ENCODE measurements at regions of chr16 and their contacts with region 1.

Region 1: DNA sequence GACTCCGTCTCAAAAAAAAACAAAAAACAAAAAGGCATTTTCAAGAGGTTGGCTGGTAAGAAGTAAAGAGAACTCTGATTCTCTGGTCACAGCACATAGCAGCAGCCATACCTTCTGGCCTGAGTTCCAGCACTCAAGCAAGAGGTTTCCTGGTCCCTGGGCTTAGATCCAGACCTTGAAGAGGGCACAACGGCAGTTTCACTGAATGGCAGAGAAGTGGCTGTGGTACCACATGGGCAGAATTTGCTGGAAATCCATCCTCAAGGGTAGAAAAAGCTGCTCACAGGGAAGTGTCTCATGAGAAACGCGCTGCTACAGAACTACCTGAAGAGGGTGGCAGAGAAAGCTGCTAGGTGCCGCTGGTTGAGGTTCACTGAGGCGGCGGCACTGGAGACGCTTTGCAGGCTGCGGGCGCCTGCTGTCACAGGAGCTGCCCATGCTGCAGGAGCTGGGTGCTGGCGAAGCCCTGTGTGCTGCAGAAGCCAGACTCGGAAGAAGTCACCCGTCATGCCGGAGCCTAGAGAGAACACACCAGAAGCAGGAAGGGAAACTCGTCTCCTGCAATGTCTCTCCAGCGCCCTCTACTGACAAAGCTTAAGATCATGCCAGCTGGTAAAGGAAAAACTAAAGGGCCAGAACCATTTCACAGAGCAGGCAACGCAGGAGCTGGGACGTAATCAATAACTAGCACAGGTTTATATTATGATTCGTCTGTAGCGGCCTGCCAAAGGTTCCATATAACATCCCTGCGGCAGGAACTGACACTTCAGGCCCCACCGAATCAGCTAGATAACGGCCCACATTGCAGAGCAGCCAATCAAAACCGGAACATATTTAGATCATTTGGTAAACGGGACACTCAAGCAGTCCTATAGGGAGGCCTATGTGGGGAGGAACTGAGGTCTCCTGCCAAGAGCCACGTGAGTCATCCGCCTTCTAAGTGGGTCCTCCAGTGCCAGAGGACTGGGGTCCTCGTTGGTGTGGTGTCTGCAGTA is 5.4 kb upstream of the ZNF213 start:
- DNase-seq: peak; percentile 56 to 94 (median 82)
- ATAC-seq: peak; percentile 73
- H3K4me3 ChIP-seq: peak overlapping the region; percentile 71 to 75
- H3K4me3 Mint-ChIP-seq: peak overlapping the region; percentile 93
- H3K27ac ChIP-seq: peak overlapping the region; percentile 41 to 65
- H3K27ac Mint-ChIP-seq: peak overlapping the region; percentile 92
- H3K4me1 ChIP-seq: peaks cover 36% of the 10 kb centered on the region
- H3K4me1 Mint-ChIP-seq: peaks cover 62% of the 10 kb centered on the region
- H3K27me3 ChIP-seq: no peaks in the 10 kb centered on the region
- H3K27me3 Mint-ChIP-seq: no peaks in the 10 kb centered on the region
- CTCF ChIP-seq: peak; percentile 86

Region 2: DNA sequence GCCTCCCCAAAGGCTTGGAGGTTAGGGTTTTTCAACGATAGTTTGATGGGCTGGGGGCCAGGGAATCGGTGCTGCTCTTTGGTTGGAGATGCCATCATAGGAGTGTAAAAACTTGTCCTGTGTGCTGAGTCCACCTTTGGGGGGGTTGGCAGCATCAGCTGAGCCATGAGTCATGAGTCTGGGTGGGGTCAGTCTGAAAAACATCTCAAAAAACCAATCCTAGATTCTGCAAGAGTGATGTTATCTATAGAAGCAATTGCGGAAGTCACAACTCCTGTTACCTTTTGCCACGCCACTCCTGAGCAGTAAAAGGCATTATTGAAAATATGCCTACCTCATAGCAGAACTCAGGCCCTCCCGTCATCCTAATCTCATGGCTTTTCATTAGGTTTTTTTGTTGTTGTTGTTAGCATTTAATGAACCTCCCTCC is 333.7 kb before region 1 on chr16:
- CTCF ChIA-PET with region 1: no interaction called
- POLR2A ChIA-PET with region 1: no interaction called
- intact Hi-C with region 1: no loop called
- DNase-seq: no peak
- ATAC-seq: no peak
- H3K4me3 ChIP-seq: no peak overlapping the region
- H3K4me3 Mint-ChIP-seq: no peak overlapping the region
- H3K27ac ChIP-seq: no peak overlapping the region
- H3K27ac Mint-ChIP-seq: no peak overlapping the region
- H3K4me1 ChIP-seq: no peaks in the 10 kb centered on the region
- H3K4me1 Mint-ChIP-seq: no peaks in the 10 kb centered on the region
- H3K27me3 ChIP-seq: peaks cover 2 to 5% of the 10 kb centered on the region in 2 experiments
- H3K27me3 Mint-ChIP-seq: peaks cover 19% of the 10 kb centered on the region
- CTCF ChIP-seq: no peak

Region 3: GRCh38 chr16:3029537-3030402 is 99.7 kb before region 1 on chr16:
- CTCF ChIA-PET with region 1: interaction called, 184 read pairs
- POLR2A ChIA-PET with region 1: interaction called, 6 read pairs
- intact Hi-C with region 1: loop called (anchors 1 kb)
- DNase-seq: peak in 4 of 9 experiments; percentile 26 to 64 (median 42)
- ATAC-seq: peak; percentile 15
- H3K4me3 ChIP-seq: peak overlapping the region in 1 of 2 experiments; percentile 28
- H3K4me3 Mint-ChIP-seq: peak overlapping the region; percentile 66
- H3K27ac ChIP-seq: no peak overlapping the region
- H3K27ac Mint-ChIP-seq: no peak overlapping the region
- H3K4me1 ChIP-seq: peaks cover 33% of the 10 kb centered on the region
- H3K4me1 Mint-ChIP-seq: peaks cover 18% of the 10 kb centered on the region
- H3K27me3 ChIP-seq: peaks cover 20 to 30% of the 10 kb centered on the region in 2 experiments
- H3K27me3 Mint-ChIP-seq: peaks cover 38% of the 10 kb centered on the region
- CTCF ChIP-seq: no peak

Region 4: DNA sequence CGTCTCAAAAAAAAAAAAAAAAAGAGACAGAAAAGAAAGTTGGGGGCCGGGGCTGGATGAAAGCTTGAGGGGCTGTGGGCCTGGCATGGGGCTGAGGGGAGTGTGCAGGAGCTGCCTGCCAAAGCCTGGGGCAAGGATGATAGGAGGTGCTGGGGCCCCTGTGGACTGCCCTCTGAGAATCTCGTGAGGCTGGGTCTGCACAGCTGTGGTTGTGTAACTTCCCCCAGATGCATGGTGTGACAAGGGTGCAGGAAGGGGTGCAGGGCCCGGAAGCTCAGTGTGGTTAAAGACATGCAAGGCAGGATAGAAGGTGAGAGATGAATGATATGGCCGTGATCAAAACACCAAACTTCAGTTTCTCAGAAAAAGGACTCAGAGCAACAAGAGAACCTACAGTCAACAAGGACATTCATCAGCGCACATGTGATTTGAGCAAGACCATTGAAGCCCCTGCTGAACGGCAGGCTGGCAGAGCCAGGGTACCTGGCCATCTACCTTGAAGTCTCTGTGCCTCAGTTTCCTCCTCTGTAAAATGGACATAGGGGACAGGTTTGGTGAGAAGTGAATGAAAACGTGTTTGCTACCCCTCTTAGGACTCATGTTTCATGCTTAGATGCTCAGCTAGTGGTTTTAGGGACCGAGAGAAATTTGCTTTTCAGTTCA is 54.4 kb before region 1 on chr16:
- CTCF ChIA-PET with region 1: interaction called, 42 read pairs
- POLR2A ChIA-PET with region 1: interaction called, 30 read pairs
- intact Hi-C with region 1: no loop called
- DNase-seq: peak; percentile 52 to 95 (median 86)
- ATAC-seq: peak; percentile 88
- H3K4me3 ChIP-seq: peak overlapping the region; percentile 3 to 19
- H3K4me3 Mint-ChIP-seq: peak overlapping the region; percentile 72
- H3K27ac ChIP-seq: peak overlapping the region; percentile 49 to 81
- H3K27ac Mint-ChIP-seq: peak overlapping the region; percentile 95
- H3K4me1 ChIP-seq: peaks cover 87% of the 10 kb centered on the region
- H3K4me1 Mint-ChIP-seq: peaks cover 89% of the 10 kb centered on the region
- H3K27me3 ChIP-seq: no peaks in the 10 kb centered on the region
- H3K27me3 Mint-ChIP-seq: no peaks in the 10 kb centered on the region
- CTCF ChIP-seq: no peak

Region 5: GRCh38 chr16:3094289-3095027 is 35.0 kb before region 1 on chr16:
- CTCF ChIA-PET with region 1: interaction called, 256 read pairs
- POLR2A ChIA-PET with region 1: interaction called, 13 read pairs
- intact Hi-C with region 1: loop called (anchors 1 kb)
- DNase-seq: peak in 6 of 9 experiments; percentile 19 to 80 (median 62)
- ATAC-seq: peak; percentile 61
- H3K4me3 ChIP-seq: no peak overlapping the region
- H3K4me3 Mint-ChIP-seq: no peak overlapping the region
- H3K27ac ChIP-seq: no peak overlapping the region
- H3K27ac Mint-ChIP-seq: peak overlapping the region; percentile 43
- H3K4me1 ChIP-seq: peaks cover 27% of the 10 kb centered on the region
- H3K4me1 Mint-ChIP-seq: peaks cover 38% of the 10 kb centered on the region
- H3K27me3 ChIP-seq: no peaks in the 10 kb centered on the region
- H3K27me3 Mint-ChIP-seq: no peaks in the 10 kb centered on the region
- CTCF ChIP-seq: peak; percentile 55

Region 6: DNA sequence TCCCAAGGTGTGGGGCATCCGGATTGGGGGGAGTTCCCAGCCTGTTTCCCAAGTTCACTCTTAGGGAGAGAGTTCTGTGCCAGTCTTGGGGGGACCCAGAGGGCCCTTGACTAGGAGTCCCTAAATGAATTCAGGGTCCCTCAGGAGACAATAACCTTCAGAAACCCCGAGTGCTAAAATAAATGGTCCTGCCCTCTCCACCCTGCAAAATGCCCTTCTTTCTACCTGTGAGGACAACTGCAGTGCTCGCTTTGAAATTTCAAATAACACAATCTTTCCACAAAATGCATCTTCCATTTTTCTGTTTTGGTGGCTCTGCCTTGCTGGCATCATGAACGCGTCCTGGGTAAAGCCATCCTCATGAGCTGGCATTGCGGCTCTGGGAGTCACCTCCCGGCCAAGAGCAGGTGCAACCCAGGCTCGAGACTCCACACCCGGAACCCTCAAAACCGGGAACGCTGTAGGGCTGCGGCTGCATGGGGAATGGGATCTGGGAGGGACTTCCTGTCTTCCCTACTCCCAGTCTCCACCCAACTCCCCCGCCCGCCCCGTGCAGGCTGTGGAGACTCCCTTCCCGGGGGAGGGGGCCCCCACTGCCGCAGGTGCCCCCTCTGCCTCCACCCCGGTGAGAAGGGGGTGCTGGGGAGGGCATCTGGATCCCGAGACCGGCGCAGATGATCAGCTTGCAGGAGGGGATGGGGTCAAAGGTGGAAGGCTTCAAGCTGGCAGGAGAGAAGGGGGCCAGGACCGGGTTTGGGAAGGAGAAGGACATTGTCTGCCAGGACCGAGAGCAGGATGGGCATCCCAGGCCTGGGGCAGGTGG is 17.2 kb before region 1 on chr16 and contains the start of gene ZNF205:
- CTCF ChIA-PET with region 1: interaction called, 256 read pairs
- POLR2A ChIA-PET with region 1: interaction called, 7 read pairs
- intact Hi-C with region 1: no loop called
- DNase-seq: no peak
- ATAC-seq: no peak
- H3K4me3 ChIP-seq: no peak within 1 kb of the TSS
- H3K4me3 Mint-ChIP-seq: no peak within 1 kb of the TSS
- H3K27ac ChIP-seq: no peak within 1 kb of the TSS
- H3K27ac Mint-ChIP-seq: no peak within 1 kb of the TSS
- H3K4me1 ChIP-seq: peaks cover 3% of the 10 kb centered on the region
- H3K4me1 Mint-ChIP-seq: peaks cover 3% of the 10 kb centered on the region
- H3K27me3 ChIP-seq: no peaks in the 10 kb centered on the region
- H3K27me3 Mint-ChIP-seq: peaks cover 2% of the 10 kb centered on the region
- CTCF ChIP-seq: no peak
- total RNA-seq, gene ZNF205: not detected

Region 7: GRCh38 chr16:3158471-3159314 is 29.3 kb after region 1 on chr16:
- CTCF ChIA-PET with region 1: interaction called, 15 read pairs
- POLR2A ChIA-PET with region 1: interaction called, 7 read pairs
- intact Hi-C with region 1: loop called (anchors 2 kb)
- DNase-seq: peak; percentile 91 to 98 (median 95)
- ATAC-seq: peak; percentile 91
- H3K4me3 ChIP-seq: peak overlapping the region; percentile 80 to 97
- H3K4me3 Mint-ChIP-seq: peak overlapping the region; percentile 90
- H3K27ac ChIP-seq: peak overlapping the region; percentile 70 to 78
- H3K27ac Mint-ChIP-seq: peak overlapping the region; percentile 94
- H3K4me1 ChIP-seq: peaks cover 23% of the 10 kb centered on the region
- H3K4me1 Mint-ChIP-seq: peaks cover 15% of the 10 kb centered on the region
- H3K27me3 ChIP-seq: no peaks in the 10 kb centered on the region
- H3K27me3 Mint-ChIP-seq: no peaks in the 10 kb centered on the region
- CTCF ChIP-seq: no peak

Region 8: DNA sequence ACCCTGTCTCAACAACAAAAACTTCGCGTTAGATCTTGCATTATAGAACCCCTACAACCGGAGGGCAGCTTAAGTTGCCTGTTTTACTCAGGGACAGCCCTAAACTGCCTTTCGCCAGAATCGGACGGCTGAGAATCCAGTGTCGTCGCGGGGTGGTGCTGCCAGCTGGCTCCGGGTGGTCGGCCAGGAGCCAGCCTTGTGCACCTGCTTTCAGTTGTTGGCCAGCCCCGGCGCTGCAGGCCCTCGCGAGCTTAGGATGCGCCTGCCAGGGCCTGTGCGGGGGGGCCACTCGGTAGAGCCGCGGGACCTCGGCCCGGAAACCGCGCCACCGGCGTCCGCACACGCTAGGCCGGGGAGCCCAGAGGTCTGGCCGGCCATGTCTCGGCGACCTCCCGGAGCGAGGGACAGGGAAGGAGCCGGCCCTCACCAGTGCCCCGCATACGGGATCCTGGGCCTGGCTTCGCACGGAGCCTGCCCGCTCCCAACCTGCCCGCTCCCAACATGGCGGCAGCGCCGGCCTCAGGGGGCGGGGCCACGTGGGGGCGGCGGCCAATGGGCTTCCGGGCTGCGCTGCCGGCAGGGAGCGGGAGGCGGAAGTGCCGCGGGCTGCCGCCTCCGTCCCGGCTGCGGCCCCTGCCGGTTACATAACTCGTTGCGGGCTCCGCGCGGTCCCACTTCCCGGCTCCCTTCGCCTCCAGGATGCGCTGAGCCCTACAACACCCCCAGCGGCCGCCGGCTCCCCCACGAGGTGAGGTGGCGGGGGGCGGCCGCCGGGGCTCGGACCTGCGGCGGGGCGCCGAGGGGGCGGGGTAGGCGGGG is 328.2 kb after region 1 on chr16:
- CTCF ChIA-PET with region 1: interaction called, 8 read pairs
- POLR2A ChIA-PET with region 1: interaction called, 5 read pairs
- intact Hi-C with region 1: loop called (anchors 1 kb)
- DNase-seq: peak; percentile 78 to 96 (median 90)
- ATAC-seq: peak; percentile 84
- H3K4me3 ChIP-seq: peak overlapping the region; percentile 71 to 72
- H3K4me3 Mint-ChIP-seq: peak overlapping the region; percentile 85
- H3K27ac ChIP-seq: peak overlapping the region; percentile 76 to 89
- H3K27ac Mint-ChIP-seq: peak overlapping the region; percentile 93
- H3K4me1 ChIP-seq: peaks cover 42% of the 10 kb centered on the region
- H3K4me1 Mint-ChIP-seq: peaks cover 52% of the 10 kb centered on the region
- H3K27me3 ChIP-seq: no peaks in the 10 kb centered on the region
- H3K27me3 Mint-ChIP-seq: no peaks in the 10 kb centered on the region
- CTCF ChIP-seq: peak; percentile 49

Region 9: DNA sequence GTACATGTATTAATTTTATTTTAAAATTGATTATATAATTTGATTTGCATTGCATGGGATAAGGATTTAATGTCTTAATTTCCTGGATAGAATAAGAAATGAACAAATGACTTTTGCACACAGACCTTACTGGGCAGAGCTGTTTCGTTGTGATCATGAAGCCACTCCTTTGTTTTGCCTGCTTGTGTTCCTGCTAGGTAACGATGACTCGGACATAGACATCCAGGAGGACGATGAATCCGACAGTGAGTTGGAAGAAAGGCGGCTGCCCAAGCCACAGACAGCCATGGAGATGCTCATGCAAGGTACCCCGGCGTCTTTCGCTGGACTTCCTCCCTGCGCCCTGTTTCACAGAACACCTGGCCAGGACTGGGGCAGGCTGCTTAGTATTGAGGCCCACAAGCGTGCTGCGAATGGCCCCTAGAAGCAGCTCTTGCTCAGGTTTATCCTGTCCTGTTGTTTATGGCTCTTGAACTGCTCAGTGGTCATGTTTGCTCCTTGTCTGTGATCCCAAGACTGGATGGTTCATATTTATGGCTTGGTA is 401.0 kb after region 1 on chr16:
- CTCF ChIA-PET with region 1: no interaction called
- POLR2A ChIA-PET with region 1: no interaction called
- intact Hi-C with region 1: no loop called
- DNase-seq: no peak
- ATAC-seq: no peak
- H3K4me3 ChIP-seq: no peak overlapping the region
- H3K4me3 Mint-ChIP-seq: no peak overlapping the region
- H3K27ac ChIP-seq: no peak overlapping the region
- H3K27ac Mint-ChIP-seq: no peak overlapping the region
- H3K4me1 ChIP-seq: no peaks in the 10 kb centered on the region
- H3K4me1 Mint-ChIP-seq: peaks cover 13% of the 10 kb centered on the region
- H3K27me3 ChIP-seq: no peaks in the 10 kb centered on the region
- H3K27me3 Mint-ChIP-seq: no peaks in the 10 kb centered on the region
- CTCF ChIP-seq: no peak

Measured in CD8-positive, alpha-beta T cell (primary cell).